Caco-2 (cell line): ENCODE measurements at regions of chr11 and their contacts with region 1.

Region 1: DNA sequence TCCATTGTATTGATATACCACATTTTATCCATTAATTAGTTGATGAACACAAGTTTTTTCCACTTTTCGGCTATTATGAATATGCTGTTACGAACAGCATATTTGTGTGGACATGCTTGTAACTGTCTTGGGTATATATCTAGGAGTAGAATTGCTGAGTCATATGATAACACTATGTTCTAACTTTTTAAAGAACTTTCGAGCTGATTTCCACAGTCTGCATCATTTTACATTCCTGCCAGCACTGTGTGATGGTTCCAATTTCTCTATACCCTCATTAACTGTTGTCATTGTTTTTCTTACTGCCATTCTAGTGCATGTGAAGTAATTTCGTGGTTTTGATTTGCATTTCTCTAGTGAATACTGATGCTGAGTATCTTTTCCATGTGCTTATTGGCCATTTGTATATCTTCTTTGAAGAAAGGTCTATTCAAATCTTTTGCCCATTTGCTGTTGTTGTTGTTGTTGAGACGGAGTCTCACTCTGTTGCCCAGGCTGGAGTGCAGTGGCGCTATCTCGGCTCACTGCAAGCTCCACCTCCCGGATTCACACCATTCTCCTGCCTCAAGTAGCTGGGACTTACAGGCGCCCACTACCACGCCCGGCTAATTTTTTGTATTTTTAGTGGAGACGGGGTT is 7.4 kb upstream of the RCE1 start:
- DNase-seq: no peak
- H3K4me3 ChIP-seq: no peak overlapping the region
- H3K4me3 Mint-ChIP-seq: no peak overlapping the region
- H3K27ac Mint-ChIP-seq: no peak overlapping the region
- H3K4me1 ChIP-seq: no peaks in the 10 kb centered on the region; the same call in 1 of the 2 replicates
- H3K4me1 Mint-ChIP-seq: peaks cover 13% of the 10 kb centered on the region
- H3K27me3 ChIP-seq: no peaks in the 10 kb centered on the region
- H3K27me3 Mint-ChIP-seq: no peaks in the 10 kb centered on the region
- CTCF ChIP-seq: no peak

Region 2: DNA sequence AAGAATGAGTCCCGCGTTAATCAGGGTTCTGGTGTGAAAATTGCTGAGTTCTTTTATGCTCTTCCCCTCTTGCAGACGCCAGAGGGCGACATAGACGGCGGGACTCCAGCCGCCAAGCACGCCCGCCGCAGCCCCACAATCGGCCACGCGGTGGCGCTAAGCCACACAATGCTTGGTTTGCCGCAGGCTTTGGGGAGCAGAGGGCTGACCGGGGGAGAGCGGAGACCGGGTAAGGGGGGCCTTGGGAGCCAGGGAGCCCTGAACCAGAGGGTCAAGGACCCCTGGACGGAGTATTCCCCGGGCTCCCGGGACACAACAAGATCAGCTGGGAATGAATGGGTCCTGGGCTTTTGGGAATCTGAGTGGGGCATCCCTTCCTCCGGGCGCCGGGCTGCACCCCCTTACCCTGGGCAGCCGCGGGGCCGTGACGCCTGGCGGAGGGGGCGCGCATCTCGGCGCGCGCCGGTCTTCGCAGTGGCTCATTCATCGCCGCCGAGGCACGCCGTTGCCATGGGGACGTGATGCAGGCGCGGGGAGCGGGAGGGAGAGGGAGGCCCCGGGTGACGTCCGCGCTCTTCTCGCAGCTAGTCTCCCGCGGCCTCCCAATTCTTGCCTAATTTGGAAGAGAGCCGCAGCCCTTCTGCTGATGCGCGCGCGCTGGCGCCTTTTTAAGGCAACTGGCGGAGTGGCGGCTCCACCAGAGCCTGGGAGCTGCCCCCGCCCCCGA is 427.2 kb before region 1 on chr11:
- CTCF ChIA-PET with region 1: no interaction called
- POLR2A ChIA-PET with region 1: no interaction called
- intact Hi-C with region 1: loop called (anchors 10 kb)
- DNase-seq: peak; percentile 76 to 93
- H3K4me3 ChIP-seq: peak overlapping the region; percentile 19
- H3K4me3 Mint-ChIP-seq: peak overlapping the region; percentile 73
- H3K27ac Mint-ChIP-seq: no peak overlapping the region
- H3K4me1 ChIP-seq: no peaks in the 10 kb centered on the region
- H3K4me1 Mint-ChIP-seq: no peaks in the 10 kb centered on the region
- H3K27me3 ChIP-seq: no peaks in the 10 kb centered on the region
- H3K27me3 Mint-ChIP-seq: peaks cover 28% of the 10 kb centered on the region
- CTCF ChIP-seq: peak; percentile 99 to 100

Region 3: DNA sequence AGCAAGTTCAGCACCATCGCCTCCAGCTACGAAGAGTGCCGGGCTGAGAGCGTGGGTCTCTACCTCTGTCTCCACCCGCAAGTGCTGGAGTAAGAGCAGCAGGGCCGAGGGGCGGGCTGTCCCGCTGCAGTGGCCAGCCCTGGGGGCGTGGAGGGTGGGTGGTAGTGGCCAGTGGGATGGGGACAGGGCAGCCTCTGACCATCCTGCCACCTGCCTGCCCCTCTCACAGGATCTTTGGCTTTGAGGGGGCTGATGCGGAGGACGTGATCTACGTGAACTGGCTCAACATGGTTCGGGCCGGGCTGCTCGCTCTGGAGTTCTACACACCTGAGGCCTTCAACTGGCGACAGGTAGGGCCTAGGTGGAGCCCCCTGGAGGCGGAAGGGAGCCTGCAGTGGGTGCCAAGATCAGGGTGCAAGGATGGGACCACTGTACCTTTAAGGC is 340.5 kb before region 1 on chr11:
- CTCF ChIA-PET with region 1: no interaction called
- POLR2A ChIA-PET with region 1: no interaction called
- intact Hi-C with region 1: no loop called
- DNase-seq: peak in 1 of 2 experiments; percentile 65
- H3K4me3 ChIP-seq: no peak overlapping the region
- H3K4me3 Mint-ChIP-seq: no peak overlapping the region
- H3K27ac Mint-ChIP-seq: no peak overlapping the region
- H3K4me1 ChIP-seq: peaks cover 22% of the 10 kb centered on the region
- H3K4me1 Mint-ChIP-seq: no peaks in the 10 kb centered on the region
- H3K27me3 ChIP-seq: no peaks in the 10 kb centered on the region
- H3K27me3 Mint-ChIP-seq: no peaks in the 10 kb centered on the region
- CTCF ChIP-seq: peak; percentile 48 to 56

Region 4: DNA sequence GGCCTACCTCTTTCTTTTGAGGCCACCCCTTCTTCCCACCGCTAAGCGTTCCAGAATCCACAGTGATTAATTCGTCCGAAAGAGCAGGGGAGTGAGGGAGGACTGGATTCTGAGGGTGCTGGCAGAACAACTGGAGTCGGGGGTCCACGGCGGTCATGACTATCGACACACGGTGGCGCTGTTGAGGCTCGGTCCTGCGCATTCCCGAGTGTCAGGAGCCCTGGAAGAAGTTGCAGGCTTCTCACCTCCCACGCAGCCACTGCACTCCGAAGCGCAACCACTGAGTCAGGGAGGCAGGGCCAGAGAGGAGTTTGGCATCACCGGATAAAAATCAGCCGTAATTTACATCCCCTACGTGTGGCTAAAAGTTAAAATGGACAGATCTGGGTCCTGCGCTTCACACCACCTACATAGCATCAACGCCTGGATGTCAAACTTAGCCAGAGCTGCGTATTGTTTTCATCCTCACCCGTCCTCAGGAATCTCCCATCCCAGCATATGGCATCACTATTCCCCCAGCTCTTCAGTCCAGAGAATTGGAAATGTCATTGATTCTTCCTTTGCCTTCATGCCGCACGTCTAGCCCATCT is 256.8 kb before region 1 on chr11:
- CTCF ChIA-PET with region 1: no interaction called
- POLR2A ChIA-PET with region 1: no interaction called
- intact Hi-C with region 1: loop called (anchors 5 kb)
- DNase-seq: peak; percentile 75 to 85
- H3K4me3 ChIP-seq: no peak overlapping the region
- H3K4me3 Mint-ChIP-seq: no peak overlapping the region
- H3K27ac Mint-ChIP-seq: no peak overlapping the region
- H3K4me1 ChIP-seq: no peaks in the 10 kb centered on the region
- H3K4me1 Mint-ChIP-seq: peaks cover 15% of the 10 kb centered on the region
- H3K27me3 ChIP-seq: no peaks in the 10 kb centered on the region; the same call in 1 of the 2 replicates
- H3K27me3 Mint-ChIP-seq: peaks cover 6% of the 10 kb centered on the region
- CTCF ChIP-seq: peak; percentile 88 to 95

Region 5: GRCh38 chr11:66609721-66610617 is 225.9 kb before region 1 on chr11:
- CTCF ChIA-PET with region 1: no interaction called
- POLR2A ChIA-PET with region 1: no interaction called
- intact Hi-C with region 1: no loop called
- DNase-seq: no peak
- H3K4me3 ChIP-seq: no peak overlapping the region
- H3K4me3 Mint-ChIP-seq: no peak overlapping the region
- H3K27ac Mint-ChIP-seq: no peak overlapping the region
- H3K4me1 ChIP-seq: no peaks in the 10 kb centered on the region
- H3K4me1 Mint-ChIP-seq: no peaks in the 10 kb centered on the region
- H3K27me3 ChIP-seq: no peaks in the 10 kb centered on the region
- H3K27me3 Mint-ChIP-seq: no peaks in the 10 kb centered on the region
- CTCF ChIP-seq: no peak

Region 6: DNA sequence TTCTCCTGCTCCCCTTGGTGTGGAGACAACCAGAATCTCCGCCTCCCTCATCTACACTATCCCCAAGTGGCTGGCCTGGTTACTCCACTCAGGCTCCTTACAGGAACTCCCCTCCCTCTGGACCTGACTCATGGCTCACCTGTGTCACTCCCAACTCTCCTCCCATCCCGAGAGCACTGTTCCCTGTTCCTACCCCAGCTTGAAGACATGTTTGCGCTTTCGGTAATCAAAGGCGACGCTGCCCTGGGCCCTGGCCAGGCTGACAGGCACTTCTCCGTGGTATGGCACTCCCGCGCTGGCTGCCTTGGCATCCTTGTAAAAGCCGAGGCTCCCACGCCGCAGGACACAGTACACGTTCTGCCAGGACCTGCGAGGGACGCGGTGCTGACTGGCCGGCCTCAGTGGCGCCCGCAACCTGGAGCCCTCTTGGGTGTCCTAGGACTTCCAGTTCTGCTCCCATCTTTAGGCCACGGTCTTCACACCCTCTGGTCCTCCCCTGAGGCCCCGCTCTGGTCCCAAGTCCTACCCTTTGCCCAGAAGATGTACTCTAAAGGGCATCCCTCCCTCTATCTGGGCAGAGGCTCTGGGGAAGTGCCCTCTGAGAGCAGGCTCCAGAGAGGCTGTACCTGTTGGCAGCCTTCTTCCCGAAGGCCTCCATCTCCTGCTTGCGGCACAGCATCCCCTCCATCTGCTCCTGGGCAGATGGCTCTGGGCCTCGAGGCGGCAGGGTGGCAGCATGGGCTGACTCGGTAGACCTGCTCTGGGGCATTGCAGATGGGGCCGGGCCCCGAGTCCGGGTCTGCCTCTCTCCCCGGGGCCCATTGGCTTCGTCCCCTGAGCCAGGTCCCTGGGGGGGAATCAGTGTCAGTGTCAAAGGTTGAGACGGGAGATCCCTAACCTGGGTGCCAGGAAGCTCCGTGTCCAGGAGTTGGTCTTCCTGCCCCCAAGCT is 148.8 kb before region 1 on chr11:
- CTCF ChIA-PET with region 1: interaction called, 10 read pairs
- POLR2A ChIA-PET with region 1: no interaction called
- intact Hi-C with region 1: no loop called
- DNase-seq: peak in 1 of 2 experiments; percentile 38
- H3K4me3 ChIP-seq: no peak overlapping the region
- H3K4me3 Mint-ChIP-seq: no peak overlapping the region
- H3K27ac Mint-ChIP-seq: peak overlapping the region; percentile 18
- H3K4me1 ChIP-seq: peaks cover 16% of the 10 kb centered on the region
- H3K4me1 Mint-ChIP-seq: peaks cover 11% of the 10 kb centered on the region
- H3K27me3 ChIP-seq: no peaks in the 10 kb centered on the region
- H3K27me3 Mint-ChIP-seq: no peaks in the 10 kb centered on the region
- CTCF ChIP-seq: no peak

Region 7: GRCh38 chr11:66727883-66728692 is 107.8 kb before region 1 on chr11:
- CTCF ChIA-PET with region 1: interaction called, 5 read pairs
- POLR2A ChIA-PET with region 1: interaction called, 10 read pairs
- intact Hi-C with region 1: no loop called
- DNase-seq: peak; percentile 48 to 58
- H3K4me3 ChIP-seq: peak overlapping the region; percentile 66
- H3K4me3 Mint-ChIP-seq: peak overlapping the region; percentile 82
- H3K27ac Mint-ChIP-seq: peak overlapping the region; percentile 60
- H3K4me1 ChIP-seq: peaks cover 20% of the 10 kb centered on the region
- H3K4me1 Mint-ChIP-seq: peaks cover 25% of the 10 kb centered on the region
- H3K27me3 ChIP-seq: no peaks in the 10 kb centered on the region
- H3K27me3 Mint-ChIP-seq: peaks cover 4% of the 10 kb centered on the region
- CTCF ChIP-seq: no peak

Region 8: GRCh38 chr11:66752148-66752547 is 83.7 kb before region 1 on chr11:
- CTCF ChIA-PET with region 1: no interaction called
- POLR2A ChIA-PET with region 1: no interaction called
- intact Hi-C with region 1: no loop called
- DNase-seq: no peak
- H3K4me3 ChIP-seq: no peak overlapping the region
- H3K4me3 Mint-ChIP-seq: no peak overlapping the region
- H3K27ac Mint-ChIP-seq: no peak overlapping the region
- H3K4me1 ChIP-seq: 0 out of 2 replicates have a peak, but pooled peaks cover 4% of the 10 kb centered on the region
- H3K4me1 Mint-ChIP-seq: peaks cover 20% of the 10 kb centered on the region
- H3K27me3 ChIP-seq: no peaks in the 10 kb centered on the region
- H3K27me3 Mint-ChIP-seq: no peaks in the 10 kb centered on the region
- CTCF ChIP-seq: no peak